Dorsolateral prefrontal cortex (tissue), 120 donors: ENCODE measurements at regions of chr4 and their contacts with region 1.

Region 1: DNA sequence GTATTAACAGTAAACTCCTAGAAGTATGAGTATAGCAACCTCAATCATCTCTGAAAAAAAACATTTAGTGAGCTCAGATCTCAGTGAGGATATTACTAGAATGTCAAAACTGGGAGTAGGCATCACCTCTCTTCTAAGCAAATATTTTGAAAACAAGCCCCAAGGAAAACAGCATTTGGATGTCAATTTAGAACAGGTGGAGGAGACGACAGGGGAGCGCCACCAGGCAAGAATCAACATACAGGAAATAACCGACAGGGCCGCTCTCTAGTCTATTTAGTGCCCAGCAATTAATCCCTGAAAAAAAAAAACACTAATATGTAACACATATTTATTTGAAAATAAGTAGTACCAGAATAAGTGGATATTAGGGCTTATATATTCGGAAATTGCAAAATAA is 940.3 kb upstream of the ADGRL3 start:
- DNase-seq: no peak
- H3K4me3 ChIP-seq: no peak overlapping the region
- H3K27ac ChIP-seq: no peak overlapping the region
- H3K27me3 ChIP-seq: no peaks in the 10 kb centered on the region
- CTCF ChIP-seq: no peak

Region 2: GRCh38 chr4:59535541-59535940 is 724.2 kb before region 1 on chr4:
- intact Hi-C with region 1: loop called in 1 of 2 experiments (anchors 10 kb)
- DNase-seq: no peak
- H3K4me3 ChIP-seq: no peak overlapping the region
- H3K27ac ChIP-seq: no peak overlapping the region
- H3K27me3 ChIP-seq: no peaks in the 10 kb centered on the region
- CTCF ChIP-seq: no peak